OCI-LY7 (cell line): ENCODE measurements at regions of chr5 and their contacts with region 1.

Region 1: GRCh38 chr5:96963267-96963666 is 27.4 kb downstream of the LNPEP start:
- DNase-seq: peak; percentile 75
- H3K4me3 ChIP-seq: peak overlapping the region; percentile 82
- H3K27ac ChIP-seq: peak overlapping the region; percentile 98
- H3K4me1 ChIP-seq: peaks cover 48% of the 10 kb centered on the region
- CTCF ChIP-seq: no peak

Region 2: GRCh38 chr5:96876292-96876850 is 86.9 kb before region 1 on chr5 and contains the start of gene ERAP2:
- CTCF ChIA-PET with region 1: interaction called, 5 read pairs
- POLR2A ChIA-PET with region 1: interaction called, 53 read pairs
- intact Hi-C with region 1: loop called (anchors 2 kb)
- DNase-seq: peak; percentile 78
- H3K4me3 ChIP-seq: peak within 1 kb of the TSS; percentile 80
- H3K27ac ChIP-seq: peak within 1 kb of the TSS; percentile 64
- H3K4me1 ChIP-seq: peaks cover 69% of the 10 kb centered on the region
- CTCF ChIP-seq: no peak
- total RNA-seq, gene ERAP2: 29.3 and 35.6 TPM in 2 replicates

Region 3: DNA sequence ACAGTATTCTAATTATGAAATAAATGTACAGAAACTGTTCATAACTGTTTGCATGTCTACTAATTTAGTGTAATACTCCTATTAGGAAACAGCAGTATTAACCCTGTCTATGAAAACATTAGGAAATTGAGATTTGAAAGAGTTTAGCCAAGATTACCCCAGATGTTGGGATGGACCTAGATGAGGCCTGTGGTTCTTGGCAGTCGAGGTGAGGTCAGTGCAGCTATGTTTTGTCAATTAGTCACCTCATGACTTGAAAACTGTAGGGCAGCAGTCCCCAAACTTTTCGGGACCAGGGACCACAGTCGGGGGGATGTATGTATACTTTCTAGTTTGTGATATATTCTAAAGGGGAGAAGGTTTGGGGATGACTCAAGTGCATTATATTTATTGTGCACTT is 22.7 kb before region 1 on chr5:
- CTCF ChIA-PET with region 1: no interaction called
- POLR2A ChIA-PET with region 1: interaction called, 38 read pairs
- intact Hi-C with region 1: loop called (anchors 1 kb)
- DNase-seq: no peak
- H3K4me3 ChIP-seq: no peak overlapping the region
- H3K27ac ChIP-seq: no peak overlapping the region
- H3K4me1 ChIP-seq: peaks cover 41% of the 10 kb centered on the region
- CTCF ChIP-seq: no peak

Region 4: GRCh38 chr5:96973532-96974401 is 10.5 kb after region 1 on chr5:
- CTCF ChIA-PET with region 1: interaction called, 3 read pairs
- POLR2A ChIA-PET with region 1: interaction called, 14 read pairs
- intact Hi-C with region 1: no loop called
- DNase-seq: peak; percentile 18
- H3K4me3 ChIP-seq: peak overlapping the region; percentile 19
- H3K27ac ChIP-seq: peak overlapping the region; percentile 16
- H3K4me1 ChIP-seq: peaks cover 72% of the 10 kb centered on the region
- CTCF ChIP-seq: no peak

Region 5: DNA sequence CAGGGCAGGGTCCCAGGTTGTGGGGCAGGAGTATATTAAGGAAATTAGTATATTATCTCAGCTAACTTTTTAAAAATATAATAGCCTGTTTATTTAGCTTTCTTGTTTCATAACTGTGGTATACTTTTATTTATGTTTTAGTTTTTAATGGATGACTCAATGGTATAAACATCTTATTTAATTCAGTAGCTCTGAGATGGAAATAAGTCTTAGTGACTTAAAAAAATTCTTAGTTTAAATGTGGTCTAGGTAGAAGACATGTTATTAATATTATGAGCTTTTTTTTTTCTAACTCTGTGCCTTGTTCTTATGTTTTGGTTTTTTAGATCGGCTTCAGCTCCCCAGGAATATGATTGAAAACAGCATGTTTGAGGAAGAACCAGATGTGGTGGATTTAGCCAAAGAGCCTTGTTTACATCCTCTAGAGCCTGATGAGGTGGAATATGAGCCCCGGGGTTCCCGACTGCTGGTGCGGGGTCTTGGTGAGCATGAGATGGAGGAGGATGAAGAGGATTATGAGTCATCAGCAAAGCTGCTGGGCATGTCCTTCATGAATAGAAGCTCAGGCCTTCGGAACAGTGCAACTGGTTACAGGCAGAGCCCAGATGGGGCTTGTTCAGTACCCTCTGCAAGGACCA is 15.7 kb after region 1 on chr5:
- CTCF ChIA-PET with region 1: no interaction called
- POLR2A ChIA-PET with region 1: interaction called, 14 read pairs
- intact Hi-C with region 1: no loop called
- DNase-seq: no peak
- H3K4me3 ChIP-seq: no peak overlapping the region
- H3K27ac ChIP-seq: no peak overlapping the region
- H3K4me1 ChIP-seq: peaks cover 21% of the 10 kb centered on the region
- CTCF ChIP-seq: no peak